Aorta (tissue), 5 donors: ENCODE measurements at regions of chr12 and their contacts with region 1.

Region 1: DNA sequence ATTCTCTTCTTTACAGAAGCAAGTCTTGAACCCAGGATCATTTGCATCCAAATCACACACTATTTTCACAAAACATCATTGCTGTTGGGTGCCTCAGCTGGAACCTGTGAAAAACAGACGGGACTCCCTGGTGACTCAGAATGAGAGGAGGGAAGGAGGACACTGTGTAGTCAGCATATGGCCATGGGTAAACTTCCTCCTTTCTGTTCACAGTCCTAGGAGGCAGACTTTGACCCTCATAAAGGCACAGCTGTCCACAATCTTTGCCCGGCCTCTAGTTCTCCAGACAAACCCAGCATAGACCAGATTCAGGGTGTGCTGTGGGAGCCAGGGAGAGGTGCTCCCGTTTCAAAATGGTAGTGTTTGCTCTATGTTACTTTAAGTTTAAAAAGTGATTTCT is 62.0 kb downstream of the DYRK2 start:
- DNase-seq: no peak
- ATAC-seq: peak; percentile 58
- H3K4me3 ChIP-seq: no peak overlapping the region
- H3K27ac ChIP-seq: no peak overlapping the region
- H3K4me1 ChIP-seq: no peaks in the 10 kb centered on the region
- H3K27me3 ChIP-seq: no peaks in the 10 kb centered on the region

Region 2: DNA sequence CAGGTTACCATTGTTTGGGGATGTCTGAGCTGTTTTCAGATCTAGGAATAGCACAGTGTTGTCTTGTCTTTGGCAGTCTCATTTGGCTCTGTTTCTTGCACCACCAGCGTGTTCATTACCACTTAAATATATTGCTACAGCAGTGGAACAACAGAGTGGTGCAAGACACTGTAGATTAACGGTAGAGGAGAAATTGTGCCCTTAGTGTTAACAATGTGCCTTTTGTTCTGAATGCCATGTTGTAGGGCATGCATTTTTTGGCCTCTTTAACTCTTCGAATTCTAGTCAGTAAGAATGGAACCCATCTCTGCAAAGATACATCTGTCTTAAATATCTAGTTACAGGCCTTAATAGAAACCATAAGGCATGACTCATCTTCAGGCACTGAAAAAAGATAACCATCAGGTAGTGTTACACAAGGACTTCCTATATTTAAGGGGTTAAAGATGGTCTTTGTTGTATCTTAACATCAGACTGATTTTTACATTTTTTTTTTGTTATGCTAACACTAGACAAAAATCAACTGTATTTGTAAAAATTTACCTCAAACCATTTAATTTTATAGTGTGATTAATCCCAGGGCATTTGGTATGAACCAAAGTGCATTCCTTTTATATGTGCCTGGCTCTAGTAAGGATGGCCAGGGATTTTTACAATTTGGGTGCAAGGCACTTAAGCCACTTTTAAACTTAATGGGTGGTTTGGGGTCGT is 49.1 kb before region 1 on chr12:
- intact Hi-C with region 1: loop called in 1 of 2 experiments (anchors 10 kb)
- DNase-seq: no peak
- ATAC-seq: no peak
- H3K4me3 ChIP-seq: no peak overlapping the region
- H3K27ac ChIP-seq: no peak overlapping the region
- H3K4me1 ChIP-seq: peaks cover 5 to 15% of the 10 kb centered on the region in 2 donors
- H3K27me3 ChIP-seq: no peaks in the 10 kb centered on the region